Calu3 (cell line): ENCODE measurements at regions of chr10 and their contacts with region 1.

Region 1: DNA sequence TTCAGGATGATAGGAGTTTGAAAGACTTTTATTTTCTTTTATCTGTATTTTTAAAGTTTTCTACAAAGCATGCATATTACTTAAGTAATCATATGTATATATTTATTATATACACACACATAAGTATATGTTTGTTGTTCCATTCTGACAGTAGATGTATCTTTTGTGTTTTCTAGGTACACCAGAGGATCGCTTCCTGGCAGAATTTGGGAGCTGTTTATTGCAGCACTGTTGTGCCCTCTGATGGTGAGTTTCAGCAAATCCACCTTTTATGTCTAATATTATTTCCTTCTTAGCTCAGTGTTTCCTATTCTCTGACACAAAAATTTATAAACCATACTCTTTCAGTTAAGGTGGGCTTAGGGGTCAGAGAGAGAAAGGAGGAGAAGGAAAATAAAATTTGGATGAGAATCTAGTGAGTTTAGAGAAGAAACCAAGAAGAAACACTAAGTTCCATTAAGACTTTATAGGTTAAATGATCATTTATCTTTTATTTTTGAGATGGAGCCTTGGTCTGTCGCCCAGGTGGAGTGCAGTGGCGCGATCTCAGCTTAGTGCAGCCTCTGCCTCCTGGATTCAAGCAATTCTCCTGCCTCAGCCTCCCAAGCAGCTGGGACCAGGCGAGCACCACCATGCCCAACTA is 59.2 kb upstream of the OIT3 start:
- DNase-seq: peak; percentile 59
- H3K4me3 Mint-ChIP-seq: no peak overlapping the region
- H3K27ac Mint-ChIP-seq: no peak overlapping the region
- H3K4me1 Mint-ChIP-seq: peaks cover 41% of the 10 kb centered on the region
- H3K27me3 Mint-ChIP-seq: no peaks in the 10 kb centered on the region
- CTCF ChIP-seq: peak; percentile 31

Region 2: GRCh38 chr10:72625608-72626443 is 208.5 kb before region 1 on chr10 and contains the start of gene MICU1:
- CTCF ChIA-PET with region 1: interaction called, 3 read pairs
- intact Hi-C with region 1: loop called (anchors 10 kb)
- DNase-seq: peak; percentile 98
- H3K4me3 Mint-ChIP-seq: peak within 1 kb of the TSS; percentile 92
- H3K27ac Mint-ChIP-seq: peak within 1 kb of the TSS; percentile 87
- H3K4me1 Mint-ChIP-seq: peaks cover 17% of the 10 kb centered on the region
- H3K27me3 Mint-ChIP-seq: no peaks in the 10 kb centered on the region
- CTCF ChIP-seq: no peak
- total RNA-seq, gene MICU1: 89.1 and 89.4 TPM in 2 replicates

Region 3: GRCh38 chr10:72637398-72637857 is 196.9 kb before region 1 on chr10:
- CTCF ChIA-PET with region 1: no interaction called
- intact Hi-C with region 1: no loop called
- DNase-seq: peak; percentile 16
- H3K4me3 Mint-ChIP-seq: no peak overlapping the region
- H3K27ac Mint-ChIP-seq: peak overlapping the region; percentile 60
- H3K4me1 Mint-ChIP-seq: peaks cover 37% of the 10 kb centered on the region
- H3K27me3 Mint-ChIP-seq: no peaks in the 10 kb centered on the region
- CTCF ChIP-seq: no peak